Activated CD8-positive, alpha-beta T cell treated with anti-CD3 and anti-CD28 coated beads, Interleukin-2, amount 10 ng/mL, durations not matched to agents 7 days and 5 days (primary cell): ENCODE measurements at regions of chr1 and their contacts with region 1.

Region 1: DNA sequence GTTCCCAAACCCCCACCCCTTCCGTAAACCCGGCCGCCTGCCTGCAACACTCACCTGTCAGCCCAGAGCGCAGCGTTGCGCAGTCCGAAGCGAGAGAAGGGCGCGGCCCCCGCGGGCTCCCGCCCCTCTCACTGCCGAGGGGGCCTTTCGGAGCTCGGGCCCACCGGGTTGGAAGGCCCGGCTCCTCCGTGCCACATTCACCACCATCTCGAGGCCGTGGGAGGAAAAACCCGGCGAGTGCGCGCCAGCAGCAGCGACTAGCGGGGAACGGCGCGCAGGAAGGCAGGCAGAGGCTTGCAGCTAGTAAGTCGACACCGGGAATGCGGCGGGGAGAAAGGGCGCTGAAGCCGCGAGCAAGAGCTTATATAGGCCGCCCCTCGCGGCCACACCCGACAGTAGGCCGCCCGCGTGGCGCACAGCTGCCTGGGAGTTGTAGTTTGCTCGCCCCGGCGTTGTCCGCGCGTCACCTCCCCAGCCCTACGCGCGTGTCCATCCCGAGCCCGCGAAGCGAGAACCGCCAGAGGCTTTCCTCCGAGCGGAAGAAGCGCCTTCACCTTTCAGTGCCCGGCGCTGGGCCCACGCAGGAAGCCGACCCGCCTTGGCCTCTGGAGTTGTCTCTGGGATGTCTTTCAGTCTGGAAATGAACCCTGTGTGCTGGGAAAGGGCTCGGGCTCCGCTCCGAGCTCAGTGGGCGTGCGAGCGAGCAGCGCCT is 10.4 kb upstream of the RAB42 start:
- DNase-seq: peak; percentile 96
- ATAC-seq: peak; percentile 86
- H3K4me3 Mint-ChIP-seq: peak overlapping the region; percentile 94
- H3K27ac Mint-ChIP-seq: peak overlapping the region; percentile 94
- H3K4me1 Mint-ChIP-seq: peaks cover 36% of the 10 kb centered on the region
- H3K27me3 Mint-ChIP-seq: no peaks in the 10 kb centered on the region

Region 2: DNA sequence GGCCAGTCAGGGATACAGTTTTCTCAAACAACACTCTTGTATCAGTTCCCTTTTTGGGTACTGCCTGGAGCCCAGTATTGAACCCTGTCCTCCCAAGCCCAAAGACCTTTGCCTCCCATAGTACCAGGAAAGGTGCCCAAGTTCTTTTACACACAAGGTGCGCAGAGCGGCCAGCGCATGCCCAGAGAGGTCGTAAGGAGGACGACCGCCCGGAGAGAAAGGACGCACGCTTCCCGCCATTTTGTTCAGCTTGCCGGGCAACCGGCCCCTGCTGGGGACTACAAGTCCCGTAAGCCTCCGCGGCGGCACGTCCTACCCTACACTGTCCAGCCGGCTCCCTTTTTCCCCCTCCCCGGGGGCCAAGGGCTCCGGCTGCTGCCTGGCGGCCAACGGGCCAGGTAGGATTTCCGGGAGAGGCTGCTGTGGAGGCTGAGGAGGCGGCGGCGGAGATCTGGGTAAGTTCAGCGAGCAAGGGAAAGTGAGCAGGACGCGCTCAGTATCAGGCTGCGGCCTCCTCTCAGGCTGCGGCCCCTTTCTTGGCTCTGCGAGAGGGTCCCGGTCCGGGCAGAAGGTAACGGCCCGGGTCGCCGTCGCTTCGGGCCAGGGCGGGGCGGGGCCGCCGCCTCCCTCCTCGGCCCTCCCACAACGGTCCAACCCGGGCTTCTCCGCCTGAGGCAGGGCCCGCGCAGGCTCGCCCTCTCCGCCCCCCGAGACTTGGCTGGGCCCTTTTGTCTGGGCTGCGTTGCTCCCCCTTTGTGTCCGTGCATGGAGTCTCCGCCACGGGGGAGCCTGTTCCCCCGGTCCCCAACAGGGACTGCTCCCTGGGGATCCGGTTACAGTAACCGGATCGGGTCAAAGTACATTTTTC is 212.1 kb before region 1 on chr1 and contains the start of gene PHACTR4:
- CTCF ChIA-PET with region 1: no interaction called
- POLR2A ChIA-PET with region 1: interaction called, 10 read pairs
- DNase-seq: peak; percentile 88
- ATAC-seq: peak; percentile 93
- H3K4me3 Mint-ChIP-seq: peak within 1 kb of the TSS; percentile 96
- H3K27ac Mint-ChIP-seq: peak within 1 kb of the TSS; percentile 95
- H3K4me1 Mint-ChIP-seq: peaks cover 33% of the 10 kb centered on the region
- H3K27me3 Mint-ChIP-seq: peaks cover 2% of the 10 kb centered on the region
- total RNA-seq, gene PHACTR4: 29.4 to 30.8 TPM

Region 3: GRCh38 chr1:28518000-28518744 is 63.5 kb before region 1 on chr1:
- CTCF ChIA-PET with region 1: interaction called, 11 read pairs
- POLR2A ChIA-PET with region 1: interaction called, 20 read pairs
- DNase-seq: peak; percentile 91
- ATAC-seq: peak; percentile 77
- H3K4me3 Mint-ChIP-seq: peak overlapping the region; percentile 92
- H3K27ac Mint-ChIP-seq: peak overlapping the region; percentile 94
- H3K4me1 Mint-ChIP-seq: peaks cover 41% of the 10 kb centered on the region
- H3K27me3 Mint-ChIP-seq: no peaks in the 10 kb centered on the region

Region 4: DNA sequence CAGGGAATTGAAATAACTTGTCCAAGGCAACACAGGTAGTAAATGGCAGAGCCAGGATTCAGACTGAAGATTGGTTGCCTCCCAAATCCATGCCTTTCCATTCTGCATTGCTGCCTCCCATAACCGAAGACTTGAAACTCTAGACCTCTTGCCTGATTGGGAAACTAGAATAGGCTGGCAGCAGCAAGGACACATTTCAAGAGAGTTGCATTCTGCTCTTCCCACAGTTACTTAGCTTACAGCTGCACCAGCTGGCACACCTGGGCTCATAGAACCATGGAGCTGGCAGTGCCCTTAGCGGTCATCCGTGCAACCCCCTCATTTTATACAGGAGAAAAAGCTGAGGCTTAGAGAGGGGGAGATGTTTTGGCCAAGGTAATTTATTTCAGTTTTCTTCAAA is 20.8 kb before region 1 on chr1:
- CTCF ChIA-PET with region 1: interaction called, 4 read pairs
- POLR2A ChIA-PET with region 1: interaction called, 13 read pairs
- DNase-seq: no peak
- ATAC-seq: no peak
- H3K4me3 Mint-ChIP-seq: no peak overlapping the region
- H3K27ac Mint-ChIP-seq: no peak overlapping the region
- H3K4me1 Mint-ChIP-seq: no peaks in the 10 kb centered on the region
- H3K27me3 Mint-ChIP-seq: no peaks in the 10 kb centered on the region

Region 5: DNA sequence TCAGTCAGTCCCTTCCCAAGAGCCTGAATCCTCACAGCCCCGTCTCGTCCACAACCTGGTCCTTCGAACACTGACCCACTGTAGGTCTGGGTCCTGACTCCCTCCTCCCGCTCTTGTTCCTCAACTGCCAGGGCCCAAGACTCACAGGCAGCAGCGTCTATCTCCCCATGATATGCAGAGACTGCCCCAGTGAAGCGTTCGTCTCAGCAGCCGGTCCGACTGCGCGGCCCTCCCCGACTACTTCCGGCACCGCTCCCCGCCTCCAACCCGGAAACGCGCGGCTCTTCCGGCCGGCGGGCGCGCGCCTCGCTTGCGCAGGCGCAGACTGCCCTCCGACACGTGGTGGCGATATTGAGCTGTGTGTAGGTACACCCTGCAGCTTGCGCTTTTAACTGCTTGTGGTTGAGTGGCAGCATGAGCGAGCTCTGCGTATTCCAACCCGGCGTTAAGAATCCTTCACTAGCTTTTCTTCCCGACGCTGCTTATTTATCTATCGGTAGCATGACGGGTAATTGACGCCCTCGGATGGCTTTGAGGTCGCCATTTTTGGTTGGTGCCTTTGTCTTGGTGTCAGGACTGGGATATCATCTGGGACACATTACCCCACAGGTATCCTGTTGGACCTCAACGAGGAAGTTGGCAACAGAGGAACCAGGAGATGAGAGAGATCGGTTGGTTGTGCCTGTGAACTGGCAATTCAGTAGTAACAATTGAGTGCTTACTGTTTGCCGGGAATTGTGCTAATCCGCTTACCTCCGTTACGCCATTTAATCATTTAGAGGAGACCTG is 61.3 kb after region 1 on chr1 and contains the start of gene TAF12:
- CTCF ChIA-PET with region 1: interaction called, 9 read pairs
- POLR2A ChIA-PET with region 1: interaction called, 45 read pairs
- DNase-seq: peak; percentile 94
- ATAC-seq: peak; percentile 90
- H3K4me3 Mint-ChIP-seq: peak within 1 kb of the TSS; percentile 99
- H3K27ac Mint-ChIP-seq: peak within 1 kb of the TSS; percentile 99
- H3K4me1 Mint-ChIP-seq: peaks cover 51% of the 10 kb centered on the region
- H3K27me3 Mint-ChIP-seq: no peaks in the 10 kb centered on the region
- total RNA-seq, gene TAF12: 35.7 to 39.3 TPM

Region 6: DNA sequence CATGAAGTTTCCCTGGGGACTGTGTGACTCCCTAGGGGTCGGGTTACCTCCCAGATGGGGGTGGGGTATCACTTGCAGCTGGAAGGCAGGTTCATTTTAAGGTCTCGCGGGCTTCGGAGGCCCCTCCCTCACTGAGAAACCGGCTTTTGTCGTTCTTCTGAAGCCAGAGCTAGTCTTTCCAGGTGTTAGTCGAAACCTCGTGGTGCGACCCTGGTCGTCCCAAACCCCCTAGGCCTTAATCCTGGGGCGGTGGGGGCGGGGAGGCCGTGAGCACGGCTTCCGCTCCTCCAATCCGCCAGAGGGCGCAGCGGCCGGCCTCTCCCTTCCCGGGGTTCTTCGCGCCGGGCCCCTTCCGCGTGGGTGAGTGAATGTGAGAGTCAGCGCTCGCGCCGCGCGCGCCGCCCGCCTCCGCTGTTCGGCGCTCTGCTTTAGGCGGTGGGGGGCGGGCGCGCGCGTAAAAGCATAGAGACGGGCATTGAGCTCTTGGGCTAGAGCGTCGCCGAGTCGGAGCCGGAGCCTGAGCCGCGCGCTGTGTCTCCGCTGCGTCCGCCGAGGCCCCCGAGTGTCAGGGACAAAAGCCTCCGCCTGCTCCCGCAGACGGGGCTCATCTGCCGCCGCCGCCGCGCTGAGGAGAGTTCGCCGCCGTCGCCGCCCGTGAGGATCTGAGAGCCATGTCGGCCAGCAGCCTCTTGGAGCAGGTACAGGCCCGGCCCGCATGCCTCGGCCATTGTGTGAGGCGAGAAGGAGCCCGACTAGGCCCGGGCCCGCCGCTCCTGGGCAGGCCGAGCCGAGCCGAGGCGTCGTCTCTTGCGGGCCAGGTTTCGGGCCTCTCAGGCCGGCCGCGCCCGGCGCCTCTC is 155.0 kb after region 1 on chr1 and contains the start of gene YTHDF2:
- CTCF ChIA-PET with region 1: interaction called, 21 read pairs
- POLR2A ChIA-PET with region 1: interaction called, 23 read pairs
- DNase-seq: peak; percentile 98
- ATAC-seq: peak; percentile 97
- H3K4me3 Mint-ChIP-seq: peak within 1 kb of the TSS; percentile 97
- H3K27ac Mint-ChIP-seq: peak within 1 kb of the TSS; percentile 94
- H3K4me1 Mint-ChIP-seq: peaks cover 38% of the 10 kb centered on the region
- H3K27me3 Mint-ChIP-seq: no peaks in the 10 kb centered on the region
- total RNA-seq, gene YTHDF2: 67.3 to 80.6 TPM